Body of pancreas (tissue), 4 donors: ENCODE measurements at regions of chr3 and their contacts with region 1.

Region 1: DNA sequence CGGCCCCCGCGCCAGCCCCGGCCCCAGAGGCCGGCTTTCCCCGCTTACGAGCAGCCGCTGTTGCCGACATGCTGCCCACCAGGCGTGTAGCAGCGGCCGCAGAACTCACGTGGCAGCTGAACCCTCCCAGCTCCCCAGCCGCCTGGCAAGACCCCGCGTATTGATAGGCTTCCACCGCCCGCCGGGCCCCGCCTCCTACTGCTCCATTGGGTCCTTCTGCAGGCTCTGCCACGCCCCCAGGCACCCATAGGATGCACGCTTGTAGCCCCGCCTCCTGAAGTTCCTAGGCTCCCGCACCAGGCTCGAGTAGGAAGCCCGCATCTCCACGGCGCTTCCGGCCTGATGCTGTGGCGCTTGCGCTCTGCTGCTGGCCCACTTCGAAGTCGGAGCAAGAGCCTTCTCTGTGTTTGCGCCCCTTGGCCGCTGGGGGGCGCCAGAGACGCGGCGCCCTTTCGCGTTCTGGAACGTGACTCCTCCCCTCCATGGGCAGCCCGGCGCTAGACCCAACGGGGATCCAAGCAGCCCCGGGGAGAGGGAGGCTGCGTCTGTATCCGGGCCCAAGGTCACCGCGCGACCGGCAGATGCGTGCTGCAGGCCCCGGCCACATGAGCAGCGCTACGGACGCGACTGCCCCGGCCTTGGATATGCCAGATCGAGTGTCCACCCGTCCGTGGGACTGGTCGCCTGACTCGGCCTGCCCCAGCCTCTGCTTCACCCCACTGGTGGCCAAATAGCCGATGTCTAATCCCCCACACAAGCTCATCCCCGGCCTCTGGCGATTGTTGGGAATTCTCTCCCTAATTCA is at the starts of genes PARP3 and RRP9:
- DNase-seq: peak; percentile 100
- ATAC-seq: peak; percentile 98
- H3K4me3 ChIP-seq: peak within 1 kb of the TSS; percentile 30 to 53
- H3K27ac ChIP-seq: peak within 1 kb of the TSS; percentile 71 to 86 (median 84)
- H3K4me1 ChIP-seq: peaks cover 30% of the 10 kb centered on the region
- H3K27me3 ChIP-seq: no peaks in the 10 kb centered on the region
- CTCF ChIP-seq: peak; percentile 98 to 100 (median 100)
- POLR2A ChIP-seq: peak in 2 of 3 donors; percentile 66 to 70
- total RNA-seq, gene PARP3: 4.2 to 18.8 TPM
- total RNA-seq, gene RRP9: 8.0 to 13.2 TPM

Region 2: DNA sequence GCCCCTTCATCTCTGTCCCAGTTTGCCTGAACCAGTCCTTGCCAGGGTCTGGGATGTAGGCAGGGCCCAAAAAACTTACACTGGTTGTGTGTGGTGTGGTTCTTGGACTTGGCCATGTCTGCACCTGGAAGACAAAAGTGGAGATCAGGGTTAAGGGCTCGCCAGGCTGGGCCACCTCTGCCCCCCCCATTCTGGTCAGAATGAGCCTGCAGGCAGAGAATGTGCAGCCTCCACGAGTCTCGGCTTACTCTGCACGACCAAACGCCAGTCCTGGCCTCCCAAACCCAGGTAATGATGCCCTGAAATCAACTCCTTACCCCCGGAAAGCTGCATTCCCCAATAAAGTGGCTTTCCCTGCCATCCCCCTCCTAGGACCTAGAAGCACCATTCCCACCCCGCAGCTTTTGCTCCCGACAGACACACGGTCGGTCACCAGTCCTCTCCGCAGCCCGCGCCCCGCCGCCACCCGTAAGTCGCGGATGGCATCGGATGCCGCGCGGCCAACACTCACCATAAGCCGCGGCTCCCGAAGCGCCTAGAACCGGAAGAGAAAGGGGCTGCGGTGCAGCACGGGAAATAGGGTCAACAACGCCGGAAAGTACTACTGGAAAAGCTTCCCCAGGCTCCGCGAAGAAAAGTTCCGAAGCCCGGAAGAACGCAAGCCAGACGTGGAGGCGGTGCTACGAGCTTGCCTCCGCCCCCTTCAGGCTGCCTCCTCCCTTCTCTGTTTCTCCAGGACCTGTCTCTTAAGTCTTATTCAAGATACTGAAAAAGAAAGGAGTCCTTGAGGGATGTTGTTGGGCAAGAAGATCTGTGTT is 53.6 kb after region 1 on chr3 and contains the start of gene RPL29:
- intact Hi-C with region 1: loop called (anchors 10 kb)
- DNase-seq: peak; percentile 93 to 95 (median 94)
- ATAC-seq: peak; percentile 98
- H3K4me3 ChIP-seq: peak within 1 kb of the TSS; percentile 44 to 98
- H3K27ac ChIP-seq: peak within 1 kb of the TSS; percentile 81 to 93 (median 88)
- H3K4me1 ChIP-seq: peaks cover 35% of the 10 kb centered on the region
- H3K27me3 ChIP-seq: no peaks in the 10 kb centered on the region
- CTCF ChIP-seq: peak in 5 of 7 experiments; percentile 16 to 53 (median 40)
- POLR2A ChIP-seq: peak; percentile 11 to 79 (median 75)
- total RNA-seq, gene RPL29: 370 to 792 TPM

Region 3: DNA sequence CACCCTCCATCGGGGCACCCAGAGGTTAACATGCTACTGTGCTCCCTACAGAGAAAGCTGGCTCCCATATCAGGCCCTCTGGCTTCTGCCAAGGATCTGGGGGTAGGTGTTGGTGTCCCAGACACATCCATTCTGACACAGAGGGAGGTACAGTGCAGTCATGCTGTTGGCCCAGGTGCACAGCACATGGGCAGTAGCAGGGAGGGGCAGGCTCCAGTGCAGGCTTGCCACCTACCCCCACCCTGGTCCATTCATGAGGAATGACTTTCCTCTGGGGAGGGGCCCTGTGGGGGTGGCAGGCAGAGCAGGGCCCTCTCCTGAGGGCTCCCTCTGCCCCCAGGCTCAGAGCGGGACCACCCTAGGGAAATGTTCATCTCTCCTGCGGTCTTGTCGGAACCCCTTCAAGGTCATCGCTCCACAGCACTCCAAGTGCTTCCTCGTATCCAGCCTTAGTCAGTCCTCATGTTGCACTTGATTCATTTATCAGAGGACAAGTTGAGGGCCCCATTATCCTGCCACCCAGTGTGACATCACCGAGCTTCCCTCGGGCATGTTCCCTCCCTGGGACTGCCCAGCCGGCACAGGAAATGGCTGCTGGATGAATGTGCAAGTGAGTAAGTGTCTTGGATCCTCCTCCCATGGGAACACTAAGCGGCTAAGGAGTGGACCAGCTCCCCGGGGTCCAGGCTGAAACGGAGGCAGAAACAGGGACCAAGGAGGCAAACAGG is 104.3 kb after region 1 on chr3:
- intact Hi-C with region 1: no loop called
- DNase-seq: peak in 1 of 4 donors; percentile 18
- ATAC-seq: peak; percentile 33
- H3K4me3 ChIP-seq: no peak overlapping the region
- H3K27ac ChIP-seq: no peak overlapping the region
- H3K4me1 ChIP-seq: peaks cover 5% of the 10 kb centered on the region
- H3K27me3 ChIP-seq: no peaks in the 10 kb centered on the region
- CTCF ChIP-seq: no peak
- POLR2A ChIP-seq: no peak